ENCODE measurements at regions of chr15 and their contacts with region 1.

Region 1: GRCh38 chr15:34318277-34319079 is 19.1 kb downstream of the SLC12A6 start:
- DNase-seq: peak; percentile 70 to 73
- ATAC-seq: peak; percentile 99
- H3K4me3 ChIP-seq: peak overlapping the region; percentile 52
- H3K27ac ChIP-seq: peak overlapping the region; percentile 64 to 73
- H3K4me1 ChIP-seq: peaks cover 10% of the 10 kb centered on the region; the same call in 2 of the 3 replicates
- CTCF ChIP-seq: no peak
- EP300 ChIP-seq: no peak
- POLR2A ChIP-seq: peak; percentile 33
- RAD21 ChIP-seq: no peak

Region 2: GRCh38 chr15:34337557-34338306 is 19.3 kb after region 1 on chr15 and contains the start of gene SLC12A6:
- CTCF ChIA-PET with region 1: interaction called, 8 read pairs
- POLR2A ChIA-PET with region 1: interaction called, 11 read pairs
- DNase-seq: peak; percentile 90 to 91
- ATAC-seq: peak; percentile 94 to 96
- H3K4me3 ChIP-seq: peak within 1 kb of the TSS; percentile 64
- H3K27ac ChIP-seq: peak within 1 kb of the TSS; percentile 83 to 95
- H3K4me1 ChIP-seq: peaks cover 15% of the 10 kb centered on the region; the same call in 2 of the 3 replicates
- CTCF ChIP-seq: no peak
- EP300 ChIP-seq: no peak
- POLR2A ChIP-seq: peak; percentile 57
- RAD21 ChIP-seq: 0 out of 5 replicates have a peak, but pooled peaks of 1 of the 2 experiments have one; percentile 18
- polyA plus RNA-seq, gene SLC12A6: 21.3 and 21.8 TPM in 2 replicates

Measured in A549 (cell line).